ENCODE measurements at regions of chr3 and their contacts with region 1.

Region 1: DNA sequence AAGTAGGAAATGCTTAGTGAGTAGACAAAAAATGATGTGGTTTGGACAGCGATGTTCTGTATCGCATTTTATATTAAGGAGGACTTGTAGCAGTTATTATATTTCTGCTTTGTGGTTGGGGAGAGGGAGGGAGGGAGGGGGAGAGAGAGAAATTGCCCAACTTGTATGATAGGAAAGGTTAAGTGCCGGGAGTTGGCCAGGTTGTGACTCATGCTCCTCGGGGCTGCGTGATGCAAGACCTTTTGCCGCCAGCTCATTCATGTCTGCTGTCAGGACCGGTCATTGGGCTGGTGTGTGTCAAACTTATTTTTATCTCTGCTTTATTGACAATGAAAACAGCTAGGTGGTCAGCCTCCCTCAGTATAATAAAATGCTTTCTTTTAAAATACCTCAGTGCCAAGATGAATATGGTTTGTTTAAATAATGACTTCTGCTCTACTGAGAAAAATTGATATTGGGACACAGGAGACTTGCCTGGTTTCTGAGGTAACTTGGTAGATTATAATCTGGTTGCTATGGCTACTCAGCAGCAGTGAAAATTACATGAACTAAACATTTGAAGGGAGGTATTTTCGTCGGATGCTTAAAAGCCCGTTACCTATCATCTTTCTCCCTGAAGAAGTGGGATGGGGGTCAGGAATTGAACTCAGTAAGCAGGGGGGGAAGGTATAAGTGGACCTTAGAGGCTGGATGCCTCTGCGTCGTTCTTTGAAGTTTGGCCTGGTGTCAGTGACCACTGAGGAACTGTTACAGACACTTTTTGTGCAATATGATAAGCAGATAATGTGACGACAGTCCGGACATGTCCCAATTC is 90.7 kb downstream of the FNDC3B start:
- DNase-seq: peak; percentile 98
- ATAC-seq: peak; percentile 90
- H3K4me3 ChIP-seq: peak overlapping the region; percentile 36; the same call in 1 of the 2 replicates
- H3K27ac ChIP-seq: peak overlapping the region; percentile 92
- H3K4me1 ChIP-seq: peaks cover 84% of the 10 kb centered on the region
- H3K27me3 ChIP-seq: no peaks in the 10 kb centered on the region
- CTCF ChIP-seq: no peak

Region 2: GRCh38 chr3:172194702-172195406 is 64.8 kb after region 1 on chr3:
- CTCF ChIA-PET with region 1: no interaction called
- POLR2A ChIA-PET with region 1: no interaction called
- intact Hi-C with region 1: no loop called
- DNase-seq: peak; percentile 52
- ATAC-seq: peak; percentile 70
- H3K4me3 ChIP-seq: no peak overlapping the region
- H3K27ac ChIP-seq: 0 out of 2 replicates have a peak overlapping the region, but pooled peaks have one; percentile 4
- H3K4me1 ChIP-seq: peaks cover 15% of the 10 kb centered on the region
- H3K27me3 ChIP-seq: no peaks in the 10 kb centered on the region
- CTCF ChIP-seq: no peak

Region 3: DNA sequence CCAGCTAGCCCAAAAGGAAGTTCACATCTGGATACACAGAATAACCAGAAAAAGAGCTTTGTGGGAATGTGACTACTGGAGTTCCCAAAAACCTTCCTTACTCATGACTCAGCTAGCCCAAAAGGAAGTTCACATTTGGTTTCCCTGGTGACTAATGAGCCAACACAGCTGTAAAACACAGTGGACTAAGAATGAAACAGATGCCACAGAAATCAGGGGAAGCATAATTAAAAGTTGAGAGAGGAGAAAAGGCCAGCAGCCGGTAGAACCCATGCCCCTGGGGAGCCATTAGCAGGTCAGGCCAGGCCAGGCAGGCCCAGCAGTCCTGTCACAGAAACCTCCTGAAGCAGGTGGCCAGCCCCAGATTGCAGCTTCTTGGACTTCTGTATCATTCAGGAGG is 187.9 kb after region 1 on chr3:
- CTCF ChIA-PET with region 1: no interaction called
- POLR2A ChIA-PET with region 1: no interaction called
- intact Hi-C with region 1: loop called (anchors 5 kb)
- DNase-seq: peak; percentile 89
- ATAC-seq: peak; percentile 91
- H3K4me3 ChIP-seq: no peak overlapping the region
- H3K27ac ChIP-seq: peak overlapping the region; percentile 88
- H3K4me1 ChIP-seq: peaks cover 36% of the 10 kb centered on the region
- H3K27me3 ChIP-seq: no peaks in the 10 kb centered on the region
- CTCF ChIP-seq: no peak